ENCODE measurements at regions of chr16 and their contacts with region 1.

Region 1: DNA sequence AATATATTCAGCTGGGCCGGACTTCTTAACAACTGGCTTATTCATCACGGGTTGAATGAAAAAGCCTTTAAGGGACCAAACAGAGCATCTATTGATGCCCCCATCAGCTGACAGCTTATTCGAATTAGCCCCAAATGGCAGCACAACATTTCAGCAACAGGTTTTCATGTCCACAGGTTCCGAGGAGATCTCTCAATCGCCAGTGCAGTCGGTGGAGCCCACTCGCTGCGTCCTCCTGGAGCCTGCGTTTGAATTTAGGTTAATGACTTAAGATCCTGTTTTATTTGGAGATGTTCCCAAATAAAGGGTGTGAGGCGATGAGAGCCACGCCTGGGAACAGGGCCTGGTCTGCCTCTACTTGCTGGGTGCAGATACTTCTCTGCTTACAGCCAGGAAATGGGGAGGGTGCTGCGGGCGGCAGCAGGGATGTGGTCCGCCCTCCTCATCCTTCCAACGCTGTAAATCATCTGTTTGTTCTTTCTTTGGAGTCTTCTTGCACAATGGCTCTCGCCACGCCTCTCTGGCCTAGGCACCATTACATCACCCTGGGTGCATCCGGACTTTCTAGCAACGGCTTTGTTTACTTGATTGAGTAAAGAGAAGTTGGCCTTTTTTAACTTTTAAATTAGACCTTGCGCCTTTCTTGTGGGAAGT is 22.6 kb downstream of the NDE1 start:
- DNase-seq: peak; percentile 87
- H3K4me3 ChIP-seq: peak overlapping the region; percentile 15; the same call in 1 of the 2 replicates
- H3K27ac ChIP-seq: peak overlapping the region; percentile 89
- H3K27me3 ChIP-seq: no peaks in the 10 kb centered on the region
- CTCF ChIP-seq: no peak

Region 2: GRCh38 chr16:13793841-13794409 is 1878.7 kb before region 1 on chr16:
- CTCF ChIA-PET with region 1: no interaction called
- POLR2A ChIA-PET with region 1: no interaction called
- DNase-seq: no peak
- H3K4me3 ChIP-seq: no peak overlapping the region
- H3K27ac ChIP-seq: no peak overlapping the region
- H3K27me3 ChIP-seq: no peaks in the 10 kb centered on the region
- CTCF ChIP-seq: no peak

Region 3: DNA sequence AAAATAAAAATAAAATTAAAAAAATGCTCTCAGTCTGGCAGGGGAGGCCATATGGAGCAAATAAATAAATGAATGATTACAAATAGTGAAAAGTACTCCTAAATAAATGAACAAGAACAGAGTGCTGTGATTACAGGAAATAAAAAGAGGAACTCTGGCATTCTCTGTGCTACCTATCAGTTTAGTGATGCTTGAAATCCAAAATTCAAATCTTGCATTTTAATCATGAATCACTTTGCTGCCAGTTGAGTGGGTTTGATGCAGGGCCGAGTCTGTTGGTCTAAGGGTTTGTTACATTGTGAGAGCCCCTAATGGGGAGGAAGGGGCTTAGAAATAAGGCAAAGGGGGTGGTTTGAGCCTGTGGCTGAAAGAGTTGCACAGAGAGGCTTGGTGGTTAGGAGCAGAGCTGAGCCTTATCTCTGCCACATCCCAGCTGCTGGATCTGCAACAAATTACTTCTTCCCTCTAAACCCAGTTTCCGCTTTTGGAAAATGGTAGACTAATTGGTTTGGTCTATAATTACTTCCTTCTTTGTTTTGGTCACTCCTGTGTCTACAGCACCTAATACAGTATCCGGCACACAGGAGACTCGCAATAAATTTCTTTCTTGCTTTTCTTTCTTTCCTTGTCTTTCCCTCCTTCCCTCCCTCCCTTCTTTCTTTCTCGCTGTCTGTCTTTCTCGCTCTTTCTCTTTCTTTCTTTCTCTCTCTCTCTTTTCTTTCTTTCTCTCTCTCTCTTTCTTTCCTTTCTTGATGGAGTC is 270.5 kb after region 1 on chr16:
- CTCF ChIA-PET with region 1: interaction called, 15 read pairs
- POLR2A ChIA-PET with region 1: no interaction called
- DNase-seq: no peak
- H3K4me3 ChIP-seq: no peak overlapping the region
- H3K27ac ChIP-seq: no peak overlapping the region
- H3K27me3 ChIP-seq: no peaks in the 10 kb centered on the region
- CTCF ChIP-seq: no peak

Region 4: DNA sequence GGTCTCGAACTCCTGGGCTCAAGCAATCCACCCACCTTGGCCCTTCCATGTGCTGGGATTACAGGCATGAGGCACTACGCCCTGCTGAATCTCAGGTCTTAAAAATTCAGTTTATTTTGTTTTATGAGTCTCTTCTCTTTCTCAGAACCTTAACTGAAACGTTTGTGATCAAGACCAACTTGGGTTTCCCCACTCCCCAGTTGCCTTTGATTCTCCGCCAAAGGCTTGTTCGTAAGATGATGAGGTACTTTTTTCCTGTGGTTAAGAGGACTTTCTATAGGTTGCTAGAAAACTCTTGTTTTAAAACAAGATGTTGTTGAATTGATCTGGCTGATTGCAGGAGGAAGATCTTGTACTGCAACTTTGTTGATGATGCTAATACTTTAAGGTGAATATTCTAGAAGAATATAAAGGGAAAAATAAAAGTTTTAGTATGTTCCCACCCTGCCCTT is 288.4 kb after region 1 on chr16:
- CTCF ChIA-PET with region 1: no interaction called
- POLR2A ChIA-PET with region 1: no interaction called
- DNase-seq: no peak
- H3K4me3 ChIP-seq: no peak overlapping the region
- H3K27ac ChIP-seq: peak overlapping the region; percentile 47
- H3K27me3 ChIP-seq: no peaks in the 10 kb centered on the region
- CTCF ChIP-seq: no peak